Uterus (tissue), 4 donors: ENCODE measurements at regions of chr9 and their contacts with region 1.

Region 1: GRCh38 chr9:76808636-76809035 is 44.4 kb downstream of the PCA3 start:
- DNase-seq: no peak
- H3K4me3 ChIP-seq: no peak overlapping the region
- H3K27ac ChIP-seq: no peak overlapping the region
- H3K4me1 ChIP-seq: no peaks in the 10 kb centered on the region
- H3K27me3 ChIP-seq: no peaks in the 10 kb centered on the region
- CTCF ChIP-seq: no peak
- POLR2A ChIP-seq: no peak

Region 2: DNA sequence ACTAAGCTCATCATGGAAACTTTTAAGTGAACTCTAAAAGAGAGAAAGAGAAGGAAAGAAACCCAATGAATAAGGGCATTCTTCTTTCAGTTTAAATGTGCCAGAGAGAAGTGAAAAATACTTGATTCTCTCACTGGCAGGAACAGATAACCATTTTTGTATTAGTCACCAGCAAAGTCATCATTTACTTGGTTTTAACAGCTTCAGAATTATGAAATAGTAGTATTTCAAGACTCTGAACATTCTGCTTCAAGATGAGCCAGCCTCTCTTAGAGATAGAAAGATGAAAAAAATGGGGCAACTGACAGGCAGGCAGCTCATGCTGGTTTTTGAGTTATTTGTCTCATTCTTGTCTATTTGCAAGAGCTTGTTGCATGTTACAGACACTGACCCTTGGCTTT is 246.1 kb before region 1 on chr9:
- intact Hi-C with region 1: no loop called
- DNase-seq: no peak
- H3K4me3 ChIP-seq: no peak overlapping the region
- H3K27ac ChIP-seq: no peak overlapping the region
- H3K4me1 ChIP-seq: no peaks in the 10 kb centered on the region
- H3K27me3 ChIP-seq: no peaks in the 10 kb centered on the region
- CTCF ChIP-seq: no peak
- POLR2A ChIP-seq: no peak

Region 3: DNA sequence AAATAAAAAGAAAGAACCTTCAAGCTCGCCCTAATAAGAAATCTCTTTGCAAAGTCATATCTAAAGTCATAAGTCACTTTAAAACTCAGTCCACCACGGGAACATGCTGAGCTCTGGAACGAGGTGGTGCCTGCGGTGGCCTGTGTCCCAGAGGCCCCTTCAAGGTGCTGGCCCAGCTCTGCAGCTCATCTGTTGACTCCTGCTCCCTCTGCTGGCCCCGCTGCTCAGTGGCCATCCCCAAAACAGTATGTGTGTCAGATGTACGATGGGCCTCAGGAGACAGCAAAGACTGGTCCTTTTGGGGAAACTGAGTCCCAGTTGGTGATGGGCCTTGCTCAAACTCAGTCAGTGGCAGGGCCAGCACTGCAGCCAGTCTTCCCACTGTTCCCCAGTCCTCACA is 188.1 kb after region 1 on chr9:
- intact Hi-C with region 1: loop called (anchors 10 kb)
- DNase-seq: peak; percentile 38 to 51
- H3K4me3 ChIP-seq: no peak overlapping the region
- H3K27ac ChIP-seq: no peak overlapping the region
- H3K4me1 ChIP-seq: no peaks in the 10 kb centered on the region
- H3K27me3 ChIP-seq: no peaks in the 10 kb centered on the region
- CTCF ChIP-seq: peak; percentile 40 to 58 (median 48)
- POLR2A ChIP-seq: no peak

Region 4: DNA sequence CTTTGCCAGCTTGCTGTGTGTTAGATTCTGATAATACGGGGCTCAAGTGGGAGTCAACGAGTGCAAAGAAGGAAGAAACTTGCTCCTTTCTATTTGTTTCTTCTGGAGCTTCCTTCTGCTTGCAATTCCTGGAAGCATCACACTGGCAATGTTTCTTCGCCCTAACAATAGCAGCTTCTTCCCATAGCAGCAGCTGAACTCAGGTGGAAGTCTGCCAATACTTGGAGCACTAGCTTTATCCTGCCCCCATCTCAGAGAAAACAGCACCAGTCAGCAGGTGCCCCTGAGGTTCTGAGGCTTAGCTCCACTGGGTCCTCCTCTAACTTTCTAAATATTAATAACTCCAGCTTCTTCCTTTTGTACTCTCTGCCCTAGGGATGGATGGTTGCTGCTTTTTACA is 223.7 kb after region 1 on chr9:
- intact Hi-C with region 1: no loop called
- DNase-seq: no peak
- H3K4me3 ChIP-seq: no peak overlapping the region
- H3K27ac ChIP-seq: no peak overlapping the region
- H3K4me1 ChIP-seq: no peaks in the 10 kb centered on the region
- H3K27me3 ChIP-seq: no peaks in the 10 kb centered on the region
- CTCF ChIP-seq: no peak
- POLR2A ChIP-seq: no peak